ENCODE measurements at regions of chr12 and their contacts with region 1.

Region 1: DNA sequence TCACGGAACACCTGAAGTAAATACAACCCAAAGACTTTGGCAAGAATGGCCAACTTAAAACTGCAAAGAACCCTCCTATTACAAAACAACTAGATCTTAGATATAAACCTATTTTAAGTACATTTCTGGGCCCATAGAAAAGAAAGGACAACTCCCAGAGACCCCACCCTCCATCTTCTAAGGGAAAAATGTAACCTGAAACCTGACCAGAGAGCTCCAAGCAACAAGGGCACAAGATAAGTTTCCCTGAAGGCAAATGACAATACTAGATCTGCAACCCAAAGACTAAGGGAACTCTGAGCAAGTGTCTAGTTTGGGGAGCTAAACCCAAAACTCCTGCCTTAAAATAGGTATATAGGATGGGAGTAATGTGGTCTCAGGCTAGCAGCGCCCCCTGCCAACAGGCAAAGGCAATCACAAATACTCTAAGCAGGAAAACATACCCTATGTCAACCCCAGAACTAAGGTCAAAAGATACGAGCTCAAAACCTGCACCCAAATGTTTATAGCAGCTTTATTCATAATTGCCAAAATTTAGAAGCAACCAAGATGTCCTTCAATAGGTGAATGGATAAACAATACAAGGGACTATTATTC is 218.9 kb downstream of the ITPR2 start:
- DNase-seq: no peak
- H3K4me3 ChIP-seq: no peak overlapping the region
- H3K27me3 ChIP-seq: no peaks in the 10 kb centered on the region
- CTCF ChIP-seq: peak; percentile 58

Region 2: GRCh38 chr12:26113853-26114719 is 500.0 kb before region 1 on chr12:
- CTCF ChIA-PET with region 1: interaction called, 20 read pairs
- POLR2A ChIA-PET with region 1: no interaction called
- DNase-seq: peak; percentile 64
- H3K4me3 ChIP-seq: peak overlapping the region; percentile 57
- H3K27me3 ChIP-seq: no peaks in the 10 kb centered on the region
- CTCF ChIP-seq: peak; percentile 28; the same call in 1 of the 2 replicates

Region 3: DNA sequence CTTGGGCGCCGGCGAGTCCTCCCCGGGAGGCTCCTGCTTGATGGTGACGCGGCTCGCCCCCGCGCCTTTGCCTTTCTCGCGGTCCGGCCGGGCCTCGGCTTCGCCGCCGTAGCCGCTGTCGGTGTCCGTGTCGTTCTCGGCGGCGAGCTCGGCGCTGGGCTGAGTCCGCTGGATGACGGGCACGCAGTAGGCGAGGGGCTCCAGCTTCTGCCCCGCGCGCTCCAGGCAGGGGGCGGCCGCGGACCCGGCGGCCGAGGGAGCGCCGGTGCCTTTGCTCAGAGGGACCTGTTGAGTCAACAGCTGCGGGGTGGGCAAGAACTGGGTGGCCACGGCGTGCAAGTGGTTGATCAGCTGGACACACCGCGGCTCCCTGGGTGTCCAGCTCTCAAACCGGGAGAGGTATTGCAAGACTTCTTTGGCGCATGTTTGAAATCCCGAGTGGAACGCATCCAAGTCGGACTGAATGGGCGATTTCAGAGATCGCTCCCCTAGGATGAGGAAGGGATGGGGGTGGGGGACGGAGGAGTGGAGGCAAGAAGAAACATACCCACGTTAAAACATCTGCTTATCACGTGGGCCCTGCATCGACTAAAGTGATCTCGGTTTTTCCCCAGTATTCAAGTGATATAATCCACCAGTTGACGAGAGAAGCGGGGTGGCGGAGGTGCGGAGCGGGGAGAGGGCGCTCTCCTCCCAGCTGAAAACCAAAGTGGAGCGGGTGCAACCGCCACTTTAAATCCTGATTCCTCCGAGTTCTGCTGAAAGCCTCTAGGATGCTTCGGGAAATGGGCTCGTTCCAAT is 491.2 kb before region 1 on chr12:
- CTCF ChIA-PET with region 1: interaction called, 20 read pairs
- POLR2A ChIA-PET with region 1: no interaction called
- DNase-seq: no peak
- H3K4me3 ChIP-seq: peak overlapping the region; percentile 56
- H3K27me3 ChIP-seq: no peaks in the 10 kb centered on the region
- CTCF ChIP-seq: peak; percentile 44

Region 4: DNA sequence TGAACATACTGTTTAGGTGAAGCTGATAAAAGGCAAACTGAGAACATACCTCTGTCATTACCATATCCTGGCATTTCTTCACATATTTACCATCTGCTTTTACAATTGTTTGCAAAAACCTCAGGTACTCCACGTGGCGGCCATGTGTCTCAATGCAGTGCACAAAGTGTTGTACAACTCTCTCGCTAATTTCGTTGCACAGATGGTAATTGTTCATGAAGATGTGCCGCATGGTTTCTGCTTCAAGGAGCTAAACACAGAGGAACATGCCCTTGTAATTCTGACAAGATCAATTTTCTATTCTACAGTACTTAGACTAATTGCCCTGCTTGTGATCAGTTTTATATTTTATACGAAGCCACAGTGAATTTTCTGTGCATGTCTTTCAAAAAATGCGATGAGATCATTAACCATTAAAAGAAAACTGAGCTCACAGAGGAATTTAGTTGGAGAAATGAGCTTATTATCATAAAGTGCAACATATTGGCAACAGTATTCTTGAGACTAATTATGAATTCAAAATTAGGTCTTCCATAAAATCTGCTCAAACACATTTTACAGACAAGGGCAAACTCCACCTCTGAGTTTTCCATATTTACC is 14.9 kb before region 1 on chr12:
- CTCF ChIA-PET with region 1: interaction called, 18 read pairs
- POLR2A ChIA-PET with region 1: no interaction called
- DNase-seq: peak; percentile 25
- H3K4me3 ChIP-seq: no peak overlapping the region
- H3K27me3 ChIP-seq: no peaks in the 10 kb centered on the region
- CTCF ChIP-seq: no peak

Region 5: DNA sequence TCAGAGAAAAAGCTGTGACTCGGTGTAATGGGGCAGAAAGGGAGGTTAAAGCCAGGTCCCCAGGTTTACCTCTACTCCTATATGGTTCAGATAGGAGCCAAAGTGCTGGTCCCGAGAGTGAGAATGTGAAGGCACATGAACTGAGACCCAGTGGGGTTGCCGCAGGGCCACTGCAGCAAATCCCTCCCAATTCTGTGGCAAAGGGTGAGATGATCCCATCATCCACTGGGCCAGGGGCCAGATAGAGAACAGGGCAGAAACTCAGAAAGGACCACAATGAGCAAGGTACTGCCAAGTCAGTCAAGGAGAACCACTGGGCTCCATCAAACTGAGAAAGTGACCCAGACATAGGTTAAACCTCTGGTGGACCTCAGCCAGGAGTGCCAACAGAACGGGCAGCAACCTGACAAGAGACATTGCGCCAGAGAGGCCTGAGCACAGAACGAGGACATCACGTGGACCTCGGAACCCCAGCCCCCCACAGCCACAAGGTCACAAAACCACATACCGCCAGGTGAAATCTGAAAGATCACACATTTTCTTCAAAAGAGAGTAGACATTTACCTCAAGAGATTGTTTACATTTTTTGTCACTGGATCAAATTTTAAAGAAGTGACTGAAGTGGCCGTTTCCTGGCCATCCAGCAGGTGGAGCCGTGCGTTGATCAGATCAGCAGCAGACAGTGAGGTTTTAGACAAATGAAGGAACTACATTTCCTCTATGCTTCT is 239.3 kb after region 1 on chr12:
- CTCF ChIA-PET with region 1: no interaction called
- POLR2A ChIA-PET with region 1: no interaction called
- DNase-seq: no peak
- H3K4me3 ChIP-seq: no peak overlapping the region
- H3K27me3 ChIP-seq: peaks cover 7% of the 10 kb centered on the region
- CTCF ChIP-seq: peak; percentile 89